ENCODE measurements at regions of chr1 and their contacts with region 1.

Region 1: GRCh38 chr1:161185282-161185682 is 8.0 kb upstream of the B4GALT3 start:
- DNase-seq: peak; percentile 90
- ATAC-seq: peak; percentile 83
- H3K4me3 Mint-ChIP-seq: peak overlapping the region; percentile 62
- H3K27ac Mint-ChIP-seq: peak overlapping the region; percentile 91
- H3K4me1 Mint-ChIP-seq: peaks cover 79% of the 10 kb centered on the region
- H3K27me3 Mint-ChIP-seq: no peaks in the 10 kb centered on the region

Region 2: GRCh38 chr1:161171191-161171590 is 14.1 kb before region 1 on chr1:
- CTCF ChIA-PET with region 1: interaction called, 39 read pairs
- POLR2A ChIA-PET with region 1: interaction called, 40 read pairs
- DNase-seq: no peak
- ATAC-seq: no peak
- H3K4me3 Mint-ChIP-seq: no peak overlapping the region
- H3K27ac Mint-ChIP-seq: no peak overlapping the region
- H3K4me1 Mint-ChIP-seq: peaks cover 34% of the 10 kb centered on the region
- H3K27me3 Mint-ChIP-seq: no peaks in the 10 kb centered on the region

Region 3: DNA sequence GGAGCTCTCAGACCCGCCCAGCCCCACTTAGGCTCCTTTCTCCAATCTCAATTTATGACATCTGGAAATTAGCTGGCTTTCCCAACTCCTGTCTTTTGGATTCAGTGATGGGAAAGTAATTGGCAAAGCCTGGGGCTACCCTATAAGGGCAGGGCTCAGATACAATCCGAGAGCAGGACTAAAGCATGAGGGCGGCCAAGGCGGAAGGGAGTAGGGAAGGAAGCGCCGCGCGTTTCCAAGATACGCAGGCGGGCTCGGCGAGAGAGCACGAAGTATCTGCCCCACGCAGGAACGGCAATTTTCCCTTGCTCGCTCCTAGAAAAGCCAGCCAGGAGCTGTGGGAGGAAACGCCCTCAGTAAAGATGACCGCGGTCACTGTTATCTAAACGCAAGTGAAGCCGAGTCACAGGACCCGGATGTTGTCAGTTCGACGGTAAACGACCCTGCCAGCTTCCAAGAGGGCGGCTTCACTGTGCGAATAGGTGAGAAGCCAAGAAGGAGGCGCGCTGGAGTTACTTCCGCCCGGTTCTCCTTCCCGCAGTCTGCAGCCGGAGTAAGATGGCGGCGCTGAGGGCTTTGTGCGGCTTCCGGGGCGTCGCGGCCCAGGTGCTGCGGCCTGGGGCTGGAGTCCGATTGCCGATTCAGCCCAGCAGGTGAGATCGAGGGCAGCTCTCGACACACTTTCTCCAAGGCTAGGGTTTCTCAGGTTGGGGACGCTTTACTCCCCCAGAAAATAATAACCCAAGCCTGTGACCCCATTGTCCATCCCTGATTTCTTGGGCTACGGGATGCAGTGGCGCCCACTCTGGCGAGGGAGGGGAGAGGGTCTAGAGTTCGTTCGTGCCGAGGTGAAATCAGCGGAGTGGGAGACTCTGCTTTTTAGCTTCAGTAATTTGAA is 16.8 kb after region 1 on chr1 and contains the start of gene NDUFS2:
- CTCF ChIA-PET with region 1: interaction called, 72 read pairs
- POLR2A ChIA-PET with region 1: interaction called, 26 read pairs
- DNase-seq: peak; percentile 99
- ATAC-seq: peak; percentile 99
- H3K4me3 Mint-ChIP-seq: peak within 1 kb of the TSS; percentile 93
- H3K27ac Mint-ChIP-seq: peak within 1 kb of the TSS; percentile 95
- H3K4me1 Mint-ChIP-seq: peaks cover 78% of the 10 kb centered on the region
- H3K27me3 Mint-ChIP-seq: no peaks in the 10 kb centered on the region
- total RNA-seq, gene NDUFS2: 73.6 to 76.8 TPM

Region 4: DNA sequence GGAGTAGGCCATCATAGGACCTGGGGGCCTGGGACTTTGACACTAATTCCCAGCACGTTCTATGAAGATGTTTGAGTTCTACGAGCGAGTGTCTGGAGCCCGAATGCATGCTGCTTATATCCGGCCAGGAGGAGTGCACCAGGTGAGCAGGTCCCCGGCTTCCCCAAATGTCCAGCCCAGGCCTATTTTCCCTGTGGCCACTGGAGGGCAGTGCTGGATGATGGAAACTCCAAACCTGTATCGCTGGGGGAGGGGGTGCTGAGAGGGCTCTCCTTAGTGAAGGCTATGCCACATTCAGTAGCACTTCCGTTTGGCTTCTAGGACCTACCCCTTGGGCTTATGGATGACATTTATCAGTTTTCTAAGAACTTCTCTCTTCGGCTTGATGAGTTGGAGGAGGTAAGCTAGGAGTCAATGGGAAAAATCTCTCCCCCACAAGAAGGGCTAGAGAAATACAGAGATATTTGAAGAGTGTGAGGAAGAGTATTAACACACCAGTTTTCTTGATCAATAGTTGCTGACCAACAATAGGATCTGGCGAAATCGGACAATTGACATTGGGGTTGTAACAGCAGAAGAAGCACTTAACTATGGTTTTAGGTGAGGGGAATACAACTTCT is 24.6 kb after region 1 on chr1:
- CTCF ChIA-PET with region 1: interaction called, 72 read pairs
- POLR2A ChIA-PET with region 1: interaction called, 4 read pairs
- DNase-seq: peak; percentile 84
- ATAC-seq: peak; percentile 89
- H3K4me3 Mint-ChIP-seq: no peak overlapping the region
- H3K27ac Mint-ChIP-seq: peak overlapping the region; percentile 57
- H3K4me1 Mint-ChIP-seq: peaks cover 48% of the 10 kb centered on the region
- H3K27me3 Mint-ChIP-seq: no peaks in the 10 kb centered on the region

Measured in activated CD8-positive, alpha-beta T cell treated with anti-CD3 and anti-CD28 coated beads, Interleukin-2, amount 10 ng/mL, durations not matched to agents 7 days and 5 days (primary cell).